Panc1 (cell line): ENCODE measurements at regions of chr17 and their contacts with region 1.

Region 1: GRCh38 chr17:1573916-1574696 is 11.5 kb upstream of the PITPNA start:
- DNase-seq: peak; percentile 22
- ATAC-seq: peak; percentile 78
- H3K4me3 ChIP-seq: no peak overlapping the region
- H3K27ac ChIP-seq: no peak overlapping the region
- H3K4me1 ChIP-seq: no peaks in the 10 kb centered on the region
- H3K27me3 ChIP-seq: no peaks in the 10 kb centered on the region
- CTCF ChIP-seq: peak; percentile 95

Region 2: DNA sequence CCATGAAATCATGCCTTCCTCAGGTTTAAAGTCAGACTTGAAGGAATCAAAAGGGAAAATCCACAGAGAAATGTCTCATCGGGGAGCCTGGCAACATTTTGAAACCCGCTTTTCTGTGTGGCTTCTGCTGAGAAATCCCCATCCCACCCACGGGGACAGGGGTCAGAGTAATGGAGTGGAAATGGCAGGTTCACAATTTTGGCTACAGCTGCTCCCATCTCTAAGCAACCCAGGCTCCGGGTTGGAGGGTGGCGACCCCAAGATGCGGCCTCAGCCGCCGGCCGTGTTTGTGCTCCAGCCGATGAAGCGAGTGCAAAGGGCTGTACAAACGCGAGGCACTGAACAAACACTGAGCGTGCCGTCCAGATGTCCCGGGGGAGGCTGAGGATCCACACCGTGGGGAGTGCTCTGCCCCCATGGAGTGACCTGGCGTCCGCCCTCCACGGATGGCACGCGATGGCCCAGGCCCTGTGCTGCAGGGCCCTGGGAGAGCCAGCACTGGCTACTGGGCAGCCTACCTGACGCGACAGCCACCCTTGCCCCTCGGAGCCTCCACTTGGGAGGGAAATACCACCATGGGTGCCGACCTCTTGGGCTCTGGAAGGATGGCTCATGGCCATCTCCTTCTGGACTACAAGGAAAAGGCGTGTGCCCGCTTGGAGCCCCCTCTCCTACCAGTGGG is 32.4 kb after region 1 on chr17:
- CTCF ChIA-PET with region 1: interaction called, 11 read pairs
- POLR2A ChIA-PET with region 1: no interaction called
- in situ Hi-C with region 1: no loop called
- intact Hi-C with region 1: no loop called
- DNase-seq: no peak
- ATAC-seq: no peak
- H3K4me3 ChIP-seq: no peak overlapping the region
- H3K27ac ChIP-seq: no peak overlapping the region
- H3K4me1 ChIP-seq: no peaks in the 10 kb centered on the region
- H3K27me3 ChIP-seq: no peaks in the 10 kb centered on the region
- CTCF ChIP-seq: no peak

Region 3: DNA sequence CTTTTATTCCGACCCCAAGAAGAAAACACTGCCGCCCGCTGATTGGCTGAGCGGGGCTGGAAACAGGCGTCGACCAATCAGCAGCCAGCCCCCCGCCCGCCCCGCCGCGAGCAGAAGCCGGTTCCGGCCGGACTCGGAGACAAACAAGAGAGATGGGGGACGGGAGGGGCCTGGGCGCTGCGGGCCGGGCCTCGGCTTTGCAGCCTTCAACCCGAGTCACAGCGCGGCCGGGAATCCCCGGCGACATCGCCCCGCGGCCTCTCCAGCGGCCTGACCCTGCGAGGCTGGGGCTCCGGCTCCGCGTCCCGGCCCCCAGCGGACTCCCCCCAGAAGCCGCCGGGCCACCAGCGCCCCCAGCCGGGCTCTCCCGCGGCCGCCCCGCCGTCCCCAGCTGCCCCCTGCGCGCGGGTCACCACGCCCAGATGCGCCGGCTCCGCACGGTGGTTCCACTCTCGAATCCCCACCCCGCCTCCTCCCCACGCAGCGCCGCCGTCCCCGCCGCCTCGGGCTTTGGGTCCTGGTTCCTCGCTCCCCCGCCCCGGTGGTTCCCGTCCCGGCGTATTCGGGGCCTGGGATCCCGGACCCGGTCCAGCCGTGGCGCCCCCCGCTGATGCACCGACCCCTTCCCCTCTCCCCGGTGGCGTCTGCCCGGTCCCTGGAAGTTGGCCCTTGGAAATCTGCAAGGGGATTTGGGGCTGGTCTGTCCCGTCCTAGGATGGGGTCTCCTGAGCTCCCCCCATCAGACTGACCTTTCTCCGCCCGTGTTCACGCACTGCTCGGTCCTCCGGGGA is 54.9 kb after region 1 on chr17:
- CTCF ChIA-PET with region 1: interaction called, 17 read pairs
- POLR2A ChIA-PET with region 1: no interaction called
- in situ Hi-C with region 1: no loop called
- intact Hi-C with region 1: loop called (anchors 2 kb)
- DNase-seq: no peak
- ATAC-seq: peak; percentile 92
- H3K4me3 ChIP-seq: peak overlapping the region; percentile 68
- H3K27ac ChIP-seq: peak overlapping the region; percentile 44
- H3K4me1 ChIP-seq: peaks cover 8% of the 10 kb centered on the region
- H3K27me3 ChIP-seq: no peaks in the 10 kb centered on the region
- CTCF ChIP-seq: peak; percentile 79; the same call in 1 of the 2 replicates

Region 4: GRCh38 chr17:1800240-1800639 is 226.1 kb after region 1 on chr17:
- CTCF ChIA-PET with region 1: no interaction called
- POLR2A ChIA-PET with region 1: no interaction called
- in situ Hi-C with region 1: no loop called
- intact Hi-C with region 1: no loop called
- DNase-seq: no peak
- ATAC-seq: no peak
- H3K4me3 ChIP-seq: no peak overlapping the region
- H3K27ac ChIP-seq: no peak overlapping the region
- H3K4me1 ChIP-seq: no peaks in the 10 kb centered on the region
- H3K27me3 ChIP-seq: no peaks in the 10 kb centered on the region
- CTCF ChIP-seq: no peak